Dendritic cell treated with granulocyte-macrophage colony-stimulating factor and Interleukin-4, amounts not matched to agents 40 ng/mL and 50 ng/mL, for 4 days (primary cell): ENCODE measurements at regions of chr18 and their contacts with region 1.

Region 1: DNA sequence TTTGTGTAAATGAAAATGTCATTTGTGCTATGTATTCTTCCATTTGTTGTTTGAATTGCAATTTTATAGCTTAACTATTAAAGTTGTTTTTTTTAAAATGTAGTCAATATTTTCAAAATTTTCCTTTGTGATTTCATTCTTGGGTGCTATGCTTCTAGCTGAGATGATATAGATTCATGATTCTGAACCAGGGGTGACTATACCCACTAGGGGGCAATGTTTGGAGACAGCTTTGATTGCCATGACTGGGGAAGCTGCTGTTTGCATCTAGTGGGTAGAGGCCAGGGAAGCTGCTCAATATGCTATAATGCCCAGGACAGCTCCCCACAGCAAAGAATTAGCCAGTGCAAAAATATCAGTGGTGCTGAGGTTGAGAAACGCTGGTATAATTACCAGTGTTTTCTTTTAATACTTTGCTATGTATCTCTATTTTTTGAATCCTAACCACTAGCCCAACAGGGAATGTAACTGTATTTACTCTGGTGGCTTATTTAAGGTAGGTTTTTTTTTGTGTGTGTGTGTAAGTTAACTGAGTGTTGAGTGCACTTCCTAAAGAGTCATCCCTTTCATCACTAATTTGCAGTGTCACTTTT is 99.7 kb downstream of the MEP1B start:
- H3K4me3 Mint-ChIP-seq: no peak overlapping the region
- H3K27ac Mint-ChIP-seq: no peak overlapping the region
- H3K4me1 Mint-ChIP-seq: no peaks in the 10 kb centered on the region
- H3K27me3 Mint-ChIP-seq: peaks cover 3% of the 10 kb centered on the region

Region 2: GRCh38 chr18:32470713-32471633 is 181.4 kb after region 1 on chr18 and contains the start of gene GAREM1:
- intact Hi-C with region 1: loop called (anchors 5 kb)
- H3K4me3 Mint-ChIP-seq: peak within 1 kb of the TSS; percentile 82
- H3K27ac Mint-ChIP-seq: peak within 1 kb of the TSS; percentile 41
- H3K4me1 Mint-ChIP-seq: peaks cover 30% of the 10 kb centered on the region
- H3K27me3 Mint-ChIP-seq: peaks cover 69% of the 10 kb centered on the region